ENCODE measurements at regions of chr3 and their contacts with region 1.

Region 1: GRCh38 chr3:119676771-119677640 is at the start of gene COX17:
- DNase-seq: peak; percentile 98
- H3K4me3 ChIP-seq: peak within 1 kb of the TSS; percentile 87
- H3K27ac ChIP-seq: peak within 1 kb of the TSS; percentile 77
- H3K4me1 ChIP-seq: peaks cover 27% of the 10 kb centered on the region
- CTCF ChIP-seq: no peak
- total RNA-seq, gene COX17: 77.3 and 109 TPM in 2 replicates

Region 2: GRCh38 chr3:118884748-118885206 is 792.2 kb before region 1 on chr3:
- CTCF ChIA-PET with region 1: no interaction called
- POLR2A ChIA-PET with region 1: no interaction called
- intact Hi-C with region 1: loop called (anchors 2 kb)
- DNase-seq: peak; percentile 55
- H3K4me3 ChIP-seq: no peak overlapping the region
- H3K27ac ChIP-seq: no peak overlapping the region
- H3K4me1 ChIP-seq: no peaks in the 10 kb centered on the region
- CTCF ChIP-seq: peak; percentile 94

Region 3: DNA sequence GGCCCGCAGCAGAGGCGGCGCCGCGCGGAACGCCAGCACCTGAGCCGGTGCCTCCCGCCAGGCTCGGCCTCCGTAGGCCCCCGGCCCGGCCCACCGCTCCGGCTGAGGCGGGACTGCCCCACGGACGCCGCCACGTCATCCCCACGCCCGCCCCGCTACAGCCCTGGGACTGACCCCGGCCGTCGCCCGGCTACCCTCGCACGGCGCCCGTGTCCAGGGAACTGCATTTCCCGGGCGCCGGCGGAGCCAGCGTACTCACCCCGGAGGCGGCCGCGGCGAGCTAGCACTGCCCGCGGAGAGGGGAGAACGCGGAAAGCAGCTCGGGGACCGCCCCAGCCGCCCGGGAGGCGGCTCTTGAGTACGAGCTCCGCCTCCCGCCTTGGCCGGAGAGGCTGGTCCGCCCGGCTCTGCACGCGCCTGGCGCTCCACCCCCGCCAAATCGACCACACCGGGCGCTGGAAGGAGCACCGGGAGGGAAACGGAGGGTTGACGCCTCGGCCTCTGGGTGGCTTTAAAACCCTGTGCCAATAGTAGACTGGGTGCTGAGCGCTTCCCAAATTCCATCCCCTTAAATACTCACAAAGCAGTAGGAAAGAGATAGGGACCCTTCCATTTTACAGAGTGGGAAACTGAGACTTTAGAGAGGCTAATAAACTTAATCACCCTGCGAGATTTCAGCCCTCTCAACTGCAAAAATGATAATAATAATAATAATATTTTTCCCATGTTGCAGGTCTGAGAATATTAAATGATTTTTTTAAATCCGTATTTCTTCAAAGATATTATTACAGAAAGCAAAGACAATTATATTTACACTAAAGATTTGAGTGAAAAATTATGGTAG is 436.2 kb before region 1 on chr3 and contains the start of gene B4GALT4:
- CTCF ChIA-PET with region 1: interaction called, 4 read pairs
- POLR2A ChIA-PET with region 1: interaction called, 3 read pairs
- intact Hi-C with region 1: loop called (anchors 10 kb)
- DNase-seq: peak; percentile 93
- H3K4me3 ChIP-seq: peak within 1 kb of the TSS; percentile 78
- H3K27ac ChIP-seq: peak within 1 kb of the TSS; percentile 62
- H3K4me1 ChIP-seq: peaks cover 13% of the 10 kb centered on the region
- CTCF ChIP-seq: no peak
- total RNA-seq, gene B4GALT4: 17.3 and 20.3 TPM in 2 replicates

Region 4: DNA sequence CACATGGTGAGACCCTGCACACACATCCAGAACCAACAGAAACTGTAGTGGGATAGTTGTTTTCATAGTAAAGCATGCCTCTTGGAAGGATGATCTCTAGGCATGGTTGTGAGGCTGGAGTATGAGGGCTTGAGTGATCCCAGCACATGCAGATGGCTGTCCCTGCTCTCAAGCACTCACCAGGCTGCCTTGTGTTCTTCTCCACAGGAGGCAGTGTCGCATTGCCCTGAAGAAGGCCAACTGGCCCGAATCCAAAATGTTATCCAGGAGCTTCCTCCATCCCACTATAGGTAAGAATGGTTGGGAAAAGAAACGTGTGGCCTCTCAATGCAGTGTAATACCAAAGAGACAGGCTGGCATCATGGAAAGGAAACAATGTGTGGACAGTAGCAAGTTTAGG is 296.3 kb before region 1 on chr3:
- CTCF ChIA-PET with region 1: no interaction called
- POLR2A ChIA-PET with region 1: no interaction called
- intact Hi-C with region 1: loop called (anchors 1 kb)
- DNase-seq: no peak
- H3K4me3 ChIP-seq: no peak overlapping the region
- H3K27ac ChIP-seq: no peak overlapping the region
- H3K4me1 ChIP-seq: no peaks in the 10 kb centered on the region
- CTCF ChIP-seq: no peak; the same call in 1 of the 2 replicates

Region 5: GRCh38 chr3:119637679-119638525 is 39.1 kb before region 1 on chr3:
- CTCF ChIA-PET with region 1: no interaction called
- POLR2A ChIA-PET with region 1: no interaction called
- intact Hi-C with region 1: no loop called
- DNase-seq: no peak
- H3K4me3 ChIP-seq: no peak overlapping the region
- H3K27ac ChIP-seq: no peak overlapping the region
- H3K4me1 ChIP-seq: no peaks in the 10 kb centered on the region
- CTCF ChIP-seq: no peak

Region 6: GRCh38 chr3:119662604-119663373 is 14.2 kb before region 1 on chr3:
- CTCF ChIA-PET with region 1: no interaction called
- POLR2A ChIA-PET with region 1: interaction called, 10 read pairs
- intact Hi-C with region 1: no loop called
- DNase-seq: no peak
- H3K4me3 ChIP-seq: no peak overlapping the region
- H3K27ac ChIP-seq: no peak overlapping the region
- H3K4me1 ChIP-seq: peaks cover 6% of the 10 kb centered on the region
- CTCF ChIP-seq: no peak